ENCODE measurements at regions of chr5 and their contacts with region 1.

Region 1: DNA sequence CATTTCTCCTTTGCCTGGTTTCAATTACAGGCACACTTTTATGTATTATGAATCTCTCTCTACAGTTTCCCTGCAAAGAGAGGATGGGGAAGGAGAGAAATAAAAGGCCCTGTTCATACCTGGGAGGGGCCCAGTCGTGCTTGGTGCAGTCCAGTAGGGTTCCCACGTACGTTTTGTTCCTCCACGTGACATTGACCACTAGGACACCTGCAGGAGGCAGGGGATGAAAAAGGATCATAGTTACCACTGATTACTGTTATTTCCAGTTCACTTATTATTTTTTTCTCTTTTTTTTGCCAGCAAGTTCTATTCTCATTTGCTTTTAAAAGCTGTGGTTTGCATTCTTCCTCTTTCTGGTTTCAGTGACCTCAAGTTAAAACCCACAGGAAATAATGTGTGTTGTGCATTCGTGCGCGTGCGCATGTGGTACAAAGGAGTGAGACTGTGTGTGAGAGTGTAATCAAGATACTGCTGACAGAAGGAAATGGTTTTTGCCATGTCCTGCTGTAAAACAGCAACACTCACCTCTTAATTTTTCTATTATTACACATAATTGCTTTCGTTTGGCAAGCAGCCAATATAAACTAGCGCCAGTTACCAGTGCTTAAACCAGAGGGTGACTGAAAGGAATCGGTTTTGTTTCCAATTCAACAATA is 96.8 kb downstream of the ZNF608 start:
- DNase-seq: peak; percentile 70 to 79
- ATAC-seq: peak; percentile 35 to 66 (median 53)
- H3K4me3 ChIP-seq: peak overlapping the region in 8 of 10 donors; percentile 8 to 65 (median 24)
- H3K27ac ChIP-seq: peak overlapping the region in 9 of 10 donors; percentile 29 to 96 (median 83)
- H3K4me1 ChIP-seq: peaks cover 0 to 63% (median 47%) of the 10 kb centered on the region in 9 donors
- H3K27me3 ChIP-seq: peaks cover 0 to 80% (median 0%) of the 10 kb centered on the region in 7 donors
- CTCF ChIP-seq: peak in 1 of 9 donors; percentile 16

Region 2: GRCh38 chr5:123752552-123753179 is 897.0 kb before region 1 on chr5:
- intact Hi-C with region 1: loop called in 1 of 10 experiments (anchors 5 kb)
- DNase-seq: peak in 1 of 2 donors; percentile 11
- ATAC-seq: peak in 7 of 8 donors; percentile 43 to 90 (median 73)
- H3K4me3 ChIP-seq: no peak overlapping the region
- H3K27ac ChIP-seq: peak overlapping the region in 6 of 10 donors; percentile 16 to 64 (median 48)
- H3K4me1 ChIP-seq: peaks cover 0 to 36% (median 29%) of the 10 kb centered on the region in 9 donors
- H3K27me3 ChIP-seq: no peaks in the 10 kb centered on the region
- CTCF ChIP-seq: no peak

Region 3: DNA sequence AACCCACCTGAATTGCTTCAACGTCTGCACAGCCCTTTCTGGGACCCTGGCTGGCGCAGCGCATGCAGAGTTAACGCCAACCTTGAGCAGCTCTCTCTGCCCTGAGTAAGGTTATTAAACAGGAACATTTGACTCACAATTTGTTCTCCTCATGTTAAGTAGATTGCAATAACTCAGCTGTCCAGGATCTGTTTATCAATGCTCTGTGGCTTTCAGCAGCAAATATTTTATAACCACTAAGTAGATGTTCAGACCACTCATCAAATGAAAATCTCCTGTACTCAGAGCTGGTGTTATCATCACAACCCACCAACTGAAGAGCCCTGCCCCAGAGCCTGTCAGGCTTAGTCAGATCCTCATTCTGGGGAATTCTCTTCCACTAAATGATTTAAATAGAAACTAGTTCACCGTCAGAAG is 306.2 kb before region 1 on chr5:
- intact Hi-C with region 1: loop called in 1 of 10 experiments (anchors 5 kb)
- DNase-seq: no peak
- ATAC-seq: peak in 4 of 8 donors; percentile 24 to 79 (median 48)
- H3K4me3 ChIP-seq: no peak overlapping the region
- H3K27ac ChIP-seq: peak overlapping the region in 1 of 10 donors; percentile 12
- H3K4me1 ChIP-seq: peaks cover 5 to 38% (median 28%) of the 10 kb centered on the region in 9 donors
- H3K27me3 ChIP-seq: no peaks in the 10 kb centered on the region
- CTCF ChIP-seq: no peak

Region 4: DNA sequence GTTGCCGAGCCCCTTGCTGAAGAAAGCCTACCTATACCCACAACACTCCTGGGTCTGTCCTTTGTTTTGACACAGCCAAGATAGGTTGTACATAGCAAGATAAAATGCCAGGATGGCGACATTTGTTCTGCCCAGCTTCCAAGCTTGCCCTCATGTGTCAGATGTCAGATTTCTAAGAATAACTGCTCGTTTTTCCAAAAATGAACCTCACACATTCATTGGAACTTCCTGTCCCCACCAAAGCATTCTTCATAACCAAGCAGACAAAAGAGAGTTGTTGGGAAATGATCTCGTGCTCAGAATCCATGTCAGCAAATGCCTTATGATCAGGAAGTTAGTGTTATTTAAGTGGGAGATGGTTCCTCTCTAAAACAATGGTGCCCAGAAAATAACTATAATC is 113.3 kb before region 1 on chr5:
- intact Hi-C with region 1: loop called in 2 of 10 experiments (anchors 5 kb)
- DNase-seq: no peak
- ATAC-seq: peak in 6 of 8 donors; percentile 34 to 82 (median 68)
- H3K4me3 ChIP-seq: no peak overlapping the region
- H3K27ac ChIP-seq: peak overlapping the region in 7 of 10 donors; percentile 23 to 55 (median 53)
- H3K4me1 ChIP-seq: peaks cover 0 to 35% (median 15%) of the 10 kb centered on the region in 9 donors
- H3K27me3 ChIP-seq: no peaks in the 10 kb centered on the region
- CTCF ChIP-seq: no peak

Region 5: DNA sequence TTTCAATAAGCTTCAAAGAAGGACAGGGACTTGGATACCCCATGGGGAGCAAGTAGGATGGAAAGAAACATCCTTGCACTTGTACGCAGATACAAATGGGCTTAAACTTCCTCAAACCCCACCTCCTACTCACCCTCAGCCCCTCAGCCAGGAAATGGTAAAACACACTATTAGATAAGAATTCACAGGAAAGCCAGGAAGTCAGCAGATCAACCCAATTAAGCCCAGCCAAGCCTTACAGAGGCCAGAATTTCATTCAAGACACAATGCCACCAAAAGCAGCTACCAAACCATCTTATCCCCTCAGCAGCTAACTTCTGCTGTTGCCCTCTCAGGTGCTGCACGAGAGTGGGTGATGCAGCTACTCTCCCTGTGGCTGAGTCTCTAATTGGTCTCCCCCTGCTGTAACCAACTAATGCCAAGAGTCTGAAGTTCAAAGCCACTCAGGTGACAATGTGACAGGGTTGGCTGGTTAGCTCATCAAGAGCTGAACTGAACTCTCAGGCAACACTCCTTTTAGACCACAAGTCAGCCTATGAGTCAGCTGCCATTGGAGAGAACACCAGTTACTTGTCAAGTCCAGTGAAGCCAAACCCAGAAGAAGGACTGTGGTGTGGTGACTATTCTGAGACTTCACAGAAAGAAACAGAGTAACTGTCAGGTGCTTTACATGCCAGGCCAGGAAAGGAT is 105.1 kb before region 1 on chr5:
- intact Hi-C with region 1: loop called in 2 of 10 experiments (anchors 5 kb)
- DNase-seq: no peak
- ATAC-seq: no peak
- H3K4me3 ChIP-seq: no peak overlapping the region
- H3K27ac ChIP-seq: no peak overlapping the region
- H3K4me1 ChIP-seq: peaks cover 0 to 8% (median under 1%) of the 10 kb centered on the region in 9 donors
- H3K27me3 ChIP-seq: no peaks in the 10 kb centered on the region
- CTCF ChIP-seq: no peak

Region 6: GRCh38 chr5:124902097-124902821 is 252.6 kb after region 1 on chr5:
- intact Hi-C with region 1: loop called in 6 of 10 experiments (anchors 2 to 10 kb)
- DNase-seq: no peak
- ATAC-seq: peak in 2 of 8 donors; percentile 12 to 34
- H3K4me3 ChIP-seq: no peak overlapping the region
- H3K27ac ChIP-seq: no peak overlapping the region
- H3K4me1 ChIP-seq: peaks cover 5 to 39% (median 33%) of the 10 kb centered on the region in 9 donors
- H3K27me3 ChIP-seq: no peaks in the 10 kb centered on the region
- CTCF ChIP-seq: no peak